Breast epithelium (tissue), 4 donors: ENCODE measurements at regions of chr1 and their contacts with region 1.

Region 1: GRCh38 chr1:18556364-18556763 is 74.3 kb upstream of the PAX7 start:
- DNase-seq: no peak
- H3K4me3 ChIP-seq: no peak overlapping the region
- H3K27ac ChIP-seq: no peak overlapping the region
- H3K4me1 ChIP-seq: no peaks in the 10 kb centered on the region
- H3K27me3 ChIP-seq: peaks cover 0 to 62% of the 10 kb centered on the region in 2 donors
- CTCF ChIP-seq: no peak
- POLR2A ChIP-seq: no peak

Region 2: GRCh38 chr1:17690906-17691634 is 865.3 kb before region 1 on chr1:
- intact Hi-C with region 1: loop called (anchors 5 kb)
- DNase-seq: no peak
- H3K4me3 ChIP-seq: no peak overlapping the region
- H3K27ac ChIP-seq: no peak overlapping the region
- H3K4me1 ChIP-seq: no peaks in the 10 kb centered on the region
- H3K27me3 ChIP-seq: no peaks in the 10 kb centered on the region
- CTCF ChIP-seq: no peak
- POLR2A ChIP-seq: no peak

Region 3: GRCh38 chr1:18530587-18531502 is 25.5 kb before region 1 on chr1:
- intact Hi-C with region 1: no loop called
- DNase-seq: no peak
- H3K4me3 ChIP-seq: no peak overlapping the region
- H3K27ac ChIP-seq: no peak overlapping the region
- H3K4me1 ChIP-seq: no peaks in the 10 kb centered on the region
- H3K27me3 ChIP-seq: peaks cover 0 to 9% of the 10 kb centered on the region in 2 donors
- CTCF ChIP-seq: no peak
- POLR2A ChIP-seq: no peak

Region 4: GRCh38 chr1:18608534-18608933 is 52.2 kb after region 1 on chr1:
- intact Hi-C with region 1: no loop called
- DNase-seq: no peak
- H3K4me3 ChIP-seq: no peak overlapping the region
- H3K27ac ChIP-seq: no peak overlapping the region
- H3K4me1 ChIP-seq: no peaks in the 10 kb centered on the region
- H3K27me3 ChIP-seq: peaks cover 0 to 24% of the 10 kb centered on the region in 2 donors
- CTCF ChIP-seq: no peak
- POLR2A ChIP-seq: no peak